A673 (cell line): ENCODE measurements at regions of chr15 and their contacts with region 1.

Region 1: DNA sequence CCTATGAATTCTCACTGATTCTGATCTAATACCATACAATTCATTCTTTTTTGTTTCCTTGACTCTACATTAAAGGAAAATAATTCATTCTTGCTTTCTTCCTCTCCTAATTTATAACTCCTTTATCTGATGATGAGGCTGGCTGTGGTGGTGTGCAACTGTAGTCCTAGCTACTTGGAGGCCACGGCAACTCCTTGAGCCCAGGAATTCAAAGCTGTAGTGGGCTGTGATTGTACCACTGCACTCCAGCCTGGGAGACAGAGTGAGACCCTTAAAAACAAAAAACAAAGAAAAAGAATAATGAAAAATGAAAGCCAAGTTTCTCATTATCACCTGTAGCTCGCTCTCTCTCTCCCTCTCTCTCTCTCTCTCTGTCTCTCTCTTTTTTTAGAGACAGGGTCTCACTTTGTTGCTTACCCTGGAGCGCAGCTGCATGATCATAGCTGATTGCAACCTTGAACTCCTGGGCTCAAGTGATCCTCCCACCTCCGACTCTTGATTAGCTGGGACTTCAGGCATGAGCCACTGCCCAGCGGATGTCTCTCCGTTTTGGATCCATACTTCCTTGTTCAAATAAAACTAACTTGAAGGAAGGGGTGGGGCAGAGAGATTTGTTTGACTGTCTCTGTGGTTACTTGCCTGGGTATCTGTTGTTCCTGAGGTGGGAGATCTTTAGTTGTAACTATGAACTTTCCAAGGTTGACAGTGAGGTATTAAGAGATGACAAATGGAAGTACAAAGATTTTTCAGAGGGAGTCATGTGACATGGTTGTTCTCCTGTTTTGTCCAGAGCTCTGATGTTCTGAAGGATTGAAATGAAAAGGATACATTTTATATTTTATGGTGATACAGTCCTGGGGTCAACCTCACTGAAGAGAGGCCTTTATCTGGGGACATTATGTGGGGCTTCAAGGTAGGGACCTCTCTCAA is 46.9 kb downstream of the STARD9 start:
- DNase-seq: no peak
- H3K4me3 ChIP-seq: no peak overlapping the region
- H3K27ac ChIP-seq: no peak overlapping the region
- H3K4me1 ChIP-seq: no peaks in the 10 kb centered on the region
- H3K27me3 ChIP-seq: no peaks in the 10 kb centered on the region
- CTCF ChIP-seq: no peak

Region 2: GRCh38 chr15:42604894-42605744 is 17.1 kb before region 1 on chr15:
- CTCF ChIA-PET with region 1: no interaction called
- POLR2A ChIA-PET with region 1: interaction called, 20 read pairs
- intact Hi-C with region 1: no loop called
- DNase-seq: peak; percentile 61
- H3K4me3 ChIP-seq: no peak overlapping the region
- H3K27ac ChIP-seq: peak overlapping the region; percentile 17
- H3K4me1 ChIP-seq: peaks cover 39% of the 10 kb centered on the region
- H3K27me3 ChIP-seq: no peaks in the 10 kb centered on the region
- CTCF ChIP-seq: no peak